ENCODE measurements at regions of chr2 and their contacts with region 1.

Region 1: DNA sequence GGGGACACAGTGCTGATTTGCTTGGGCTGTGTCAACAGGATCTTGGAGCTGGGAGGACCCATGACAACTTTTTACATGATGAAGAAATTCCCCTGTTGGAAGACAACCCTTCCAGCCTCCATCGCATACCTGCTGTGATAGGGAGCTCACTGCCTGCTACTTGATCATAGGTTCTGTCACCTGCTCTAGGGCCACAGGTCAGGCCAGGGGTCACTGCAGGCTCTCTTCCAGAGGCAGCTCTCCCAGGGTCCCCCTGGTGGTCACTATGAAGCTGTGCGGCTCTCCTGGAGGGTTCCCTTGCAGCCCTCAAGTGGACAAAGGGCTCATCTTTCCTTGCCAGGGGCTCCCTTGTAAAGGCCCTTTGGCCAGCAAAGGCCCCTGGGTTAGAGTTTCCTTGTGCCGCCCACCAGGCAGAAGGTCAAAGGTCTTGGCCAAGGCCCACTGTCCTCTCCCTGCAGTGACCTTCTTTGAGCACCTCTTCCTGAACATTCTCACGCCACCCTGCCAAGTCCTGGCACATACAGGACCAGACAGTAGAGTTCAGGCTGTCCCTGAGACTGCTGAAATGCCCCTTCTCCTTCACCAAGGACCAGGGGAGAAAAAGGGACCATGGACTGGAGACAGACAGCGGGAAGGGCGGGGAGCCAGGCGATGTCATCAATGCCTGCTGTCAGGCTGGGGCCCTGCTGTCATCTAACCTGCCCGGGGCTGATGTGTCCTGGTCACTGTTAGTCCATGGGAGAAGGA is 345.1 kb downstream of the DYSF start:
- DNase-seq: peak in 1 of 2 donors; percentile 73
- ATAC-seq: no peak
- H3K4me3 ChIP-seq: no peak overlapping the region
- H3K27ac ChIP-seq: no peak overlapping the region
- H3K4me1 ChIP-seq: no peaks in the 10 kb centered on the region
- H3K27me3 ChIP-seq: no peaks in the 10 kb centered on the region

Region 2: DNA sequence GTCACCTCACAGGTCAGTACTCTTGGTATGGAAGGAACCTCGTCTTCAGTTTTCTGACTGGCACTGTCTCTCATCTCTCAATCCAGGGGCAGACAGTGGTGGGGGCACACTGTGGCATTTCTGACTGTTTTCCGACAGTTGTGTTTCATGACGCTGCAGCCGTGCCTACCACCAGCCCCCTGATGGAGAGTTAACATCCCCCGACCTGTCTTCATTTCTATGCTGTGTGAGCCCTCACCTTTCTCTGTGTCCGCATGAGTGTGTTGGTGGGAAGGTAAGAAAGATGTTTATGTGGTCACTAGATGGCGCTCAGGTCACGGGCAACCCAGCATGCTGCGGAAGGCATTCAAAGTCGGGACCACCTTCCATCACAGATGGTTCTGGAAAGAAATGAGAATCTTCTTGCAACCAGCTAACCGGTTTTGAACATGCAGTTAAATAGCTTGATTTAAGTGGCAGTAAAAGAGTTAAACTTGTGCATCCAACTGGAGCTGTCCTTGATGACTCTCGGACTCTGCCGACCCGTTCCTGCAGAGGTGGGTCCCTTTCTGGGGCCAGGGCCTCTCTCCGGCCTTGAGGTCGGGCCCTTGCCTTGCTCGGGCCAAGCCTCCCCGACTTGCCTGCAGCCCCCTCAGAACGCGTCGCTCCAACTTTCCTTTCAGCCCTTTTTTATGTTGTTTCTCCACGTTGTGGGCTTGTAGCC is 252.7 kb before region 1 on chr2:
- intact Hi-C with region 1: loop called (anchors 5 kb)
- DNase-seq: peak; percentile 58 to 78
- ATAC-seq: peak; percentile 62
- H3K4me3 ChIP-seq: no peak overlapping the region
- H3K27ac ChIP-seq: no peak overlapping the region
- H3K4me1 ChIP-seq: no peaks in the 10 kb centered on the region
- H3K27me3 ChIP-seq: no peaks in the 10 kb centered on the region

Region 3: GRCh38 chr2:71700658-71701397 is 97.6 kb before region 1 on chr2:
- intact Hi-C with region 1: loop called in 1 of 2 experiments (anchors 5 kb)
- DNase-seq: peak; percentile 84 to 93
- ATAC-seq: peak; percentile 85
- H3K4me3 ChIP-seq: no peak overlapping the region
- H3K27ac ChIP-seq: peak overlapping the region in 1 of 2 donors; percentile 69
- H3K4me1 ChIP-seq: no peaks in the 10 kb centered on the region
- H3K27me3 ChIP-seq: no peaks in the 10 kb centered on the region

Region 4: GRCh38 chr2:71882949-71883472 is 84.6 kb after region 1 on chr2:
- intact Hi-C with region 1: loop called in 1 of 2 experiments (anchors 5 kb)
- DNase-seq: peak; percentile 79 to 89
- ATAC-seq: peak; percentile 28
- H3K4me3 ChIP-seq: no peak overlapping the region
- H3K27ac ChIP-seq: no peak overlapping the region
- H3K4me1 ChIP-seq: peaks cover 0 to 5% of the 10 kb centered on the region in 2 donors
- H3K27me3 ChIP-seq: no peaks in the 10 kb centered on the region

Region 5: GRCh38 chr2:71989671-71990070 is 191.2 kb after region 1 on chr2:
- intact Hi-C with region 1: loop called (anchors 2 to 5 kb)
- DNase-seq: no peak
- ATAC-seq: no peak
- H3K4me3 ChIP-seq: no peak overlapping the region
- H3K27ac ChIP-seq: no peak overlapping the region
- H3K4me1 ChIP-seq: no peaks in the 10 kb centered on the region
- H3K27me3 ChIP-seq: peaks cover 0 to 1% of the 10 kb centered on the region in 2 donors

Region 6: DNA sequence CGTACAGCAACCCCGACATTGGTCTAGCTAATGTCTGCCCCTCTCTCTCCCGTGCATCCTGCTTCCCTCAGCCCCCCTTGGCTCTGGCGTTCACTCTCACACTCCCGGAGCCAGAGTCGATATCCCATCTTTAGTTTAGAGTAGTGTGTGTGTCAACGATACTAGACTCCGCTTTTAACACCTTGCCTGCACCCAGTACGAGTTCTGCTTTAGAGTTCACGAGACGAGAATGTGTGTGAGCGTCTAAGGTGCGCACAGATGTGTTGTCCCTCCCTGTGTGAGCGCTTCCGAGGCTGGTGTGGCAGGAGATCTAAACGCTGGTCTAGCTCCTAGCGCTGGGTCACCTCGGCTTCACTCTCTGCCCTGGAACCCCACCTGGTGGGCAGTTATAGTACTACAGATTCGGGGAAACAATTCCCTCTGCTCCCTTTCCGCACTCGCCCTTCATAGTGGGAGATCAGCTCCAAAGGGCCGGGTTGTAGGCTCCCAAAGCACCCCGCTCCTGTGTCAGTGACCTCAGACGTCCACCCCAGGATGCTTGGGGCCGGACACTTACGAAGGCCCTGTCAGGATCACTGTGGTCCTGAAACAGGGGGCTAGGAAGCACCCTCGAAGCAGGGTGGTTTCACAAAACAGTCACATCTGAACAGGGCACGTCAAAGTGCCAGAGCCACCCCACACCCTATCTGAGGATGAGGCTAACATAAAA is 351.9 kb after region 1 on chr2:
- intact Hi-C with region 1: loop called (anchors 2 to 5 kb)
- DNase-seq: peak; percentile 74 to 88
- ATAC-seq: peak; percentile 89
- H3K4me3 ChIP-seq: no peak overlapping the region
- H3K27ac ChIP-seq: no peak overlapping the region
- H3K4me1 ChIP-seq: no peaks in the 10 kb centered on the region
- H3K27me3 ChIP-seq: no peaks in the 10 kb centered on the region

Measured in aorta (tissue), 5 donors.